AG04449 (cell line): ENCODE measurements at regions of chr6 and their contacts with region 1.

Region 1: DNA sequence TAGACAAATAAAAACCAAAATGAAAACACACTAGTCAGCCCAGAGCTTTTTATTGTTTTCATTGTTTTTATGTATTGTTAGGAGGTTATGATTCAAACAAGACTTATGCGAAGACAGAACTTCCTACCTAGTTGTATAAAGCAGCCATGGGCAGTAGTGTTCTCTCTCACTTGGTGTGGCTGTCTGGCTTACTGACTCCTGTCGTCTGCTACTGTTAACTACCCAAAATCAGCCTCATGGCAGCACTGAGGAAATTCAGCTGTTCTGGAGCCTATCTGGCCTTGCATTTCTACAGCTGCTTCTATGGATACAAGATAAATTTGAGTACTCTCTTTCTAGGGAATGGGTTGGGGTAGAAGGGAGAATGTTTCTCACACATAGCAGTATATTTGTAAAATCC is 20.4 kb downstream of the VTA1 start:
- DNase-seq: no peak
- H3K4me3 ChIP-seq: no peak overlapping the region
- CTCF ChIP-seq: no peak

Region 2: DNA sequence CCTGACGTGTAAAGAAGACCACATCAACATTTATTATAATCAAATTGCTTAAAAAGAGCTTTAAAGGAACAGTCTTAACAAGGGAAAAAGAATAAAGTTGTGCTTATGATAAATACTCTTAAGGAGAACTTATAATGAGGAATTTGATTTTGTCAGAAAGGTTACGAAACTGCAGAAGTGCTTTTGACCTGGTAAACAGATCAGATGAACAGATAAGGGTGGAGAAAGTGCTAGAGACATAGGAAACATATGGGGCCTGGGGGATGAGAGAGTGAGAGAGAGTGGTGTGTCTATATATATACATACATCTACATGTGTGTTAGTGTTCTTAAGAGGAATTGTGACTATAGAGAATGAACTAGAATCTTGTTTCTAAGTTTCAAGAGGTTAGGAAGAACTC is 221.0 kb before region 1 on chr6:
- CTCF ChIA-PET with region 1: no interaction called
- POLR2A ChIA-PET with region 1: no interaction called
- DNase-seq: no peak
- H3K4me3 ChIP-seq: no peak overlapping the region
- CTCF ChIP-seq: no peak

Region 3: GRCh38 chr6:142146828-142147662 is 20.4 kb before region 1 on chr6 and contains the starts of genes NMBR and VTA1:
- CTCF ChIA-PET with region 1: interaction called, 13 read pairs
- POLR2A ChIA-PET with region 1: no interaction called
- DNase-seq: peak; percentile 96
- H3K4me3 ChIP-seq: peak within 1 kb of the TSS; percentile 97
- CTCF ChIP-seq: peak; percentile 85

Region 4: GRCh38 chr6:142222022-142222421 is 54.5 kb after region 1 on chr6:
- CTCF ChIA-PET with region 1: no interaction called
- POLR2A ChIA-PET with region 1: no interaction called
- DNase-seq: no peak
- H3K4me3 ChIP-seq: no peak overlapping the region
- CTCF ChIP-seq: no peak

Region 5: DNA sequence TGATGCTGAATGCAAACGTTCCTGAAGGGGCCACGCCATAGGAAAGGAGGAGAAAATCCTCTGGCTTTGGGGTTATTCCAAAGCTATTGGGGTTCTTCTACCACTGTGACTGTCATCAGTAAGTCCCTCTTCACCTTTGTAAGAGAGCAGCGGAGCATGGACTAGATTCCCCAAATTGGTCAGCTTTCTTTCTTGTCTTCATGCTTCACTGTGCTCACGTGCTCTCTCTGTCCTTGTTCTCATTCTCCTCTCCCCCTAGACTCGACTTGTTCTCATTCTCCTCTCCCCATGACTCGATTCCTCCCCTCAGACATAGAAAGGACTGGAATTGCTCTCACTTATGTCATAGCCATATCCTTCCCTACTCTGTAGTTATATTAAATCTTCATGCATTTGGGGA is 79.5 kb after region 1 on chr6:
- CTCF ChIA-PET with region 1: no interaction called
- POLR2A ChIA-PET with region 1: no interaction called
- DNase-seq: no peak
- H3K4me3 ChIP-seq: no peak overlapping the region
- CTCF ChIP-seq: no peak

Region 6: GRCh38 chr6:142728910-142729481 is 561.5 kb after region 1 on chr6:
- CTCF ChIA-PET with region 1: no interaction called
- POLR2A ChIA-PET with region 1: no interaction called
- DNase-seq: peak; percentile 28
- H3K4me3 ChIP-seq: no peak overlapping the region; the same call in 1 of the 2 replicates
- CTCF ChIP-seq: no peak